CD4-positive, alpha-beta T cell (primary cell): ENCODE measurements at regions of chr16 and their contacts with region 1.

Region 1: DNA sequence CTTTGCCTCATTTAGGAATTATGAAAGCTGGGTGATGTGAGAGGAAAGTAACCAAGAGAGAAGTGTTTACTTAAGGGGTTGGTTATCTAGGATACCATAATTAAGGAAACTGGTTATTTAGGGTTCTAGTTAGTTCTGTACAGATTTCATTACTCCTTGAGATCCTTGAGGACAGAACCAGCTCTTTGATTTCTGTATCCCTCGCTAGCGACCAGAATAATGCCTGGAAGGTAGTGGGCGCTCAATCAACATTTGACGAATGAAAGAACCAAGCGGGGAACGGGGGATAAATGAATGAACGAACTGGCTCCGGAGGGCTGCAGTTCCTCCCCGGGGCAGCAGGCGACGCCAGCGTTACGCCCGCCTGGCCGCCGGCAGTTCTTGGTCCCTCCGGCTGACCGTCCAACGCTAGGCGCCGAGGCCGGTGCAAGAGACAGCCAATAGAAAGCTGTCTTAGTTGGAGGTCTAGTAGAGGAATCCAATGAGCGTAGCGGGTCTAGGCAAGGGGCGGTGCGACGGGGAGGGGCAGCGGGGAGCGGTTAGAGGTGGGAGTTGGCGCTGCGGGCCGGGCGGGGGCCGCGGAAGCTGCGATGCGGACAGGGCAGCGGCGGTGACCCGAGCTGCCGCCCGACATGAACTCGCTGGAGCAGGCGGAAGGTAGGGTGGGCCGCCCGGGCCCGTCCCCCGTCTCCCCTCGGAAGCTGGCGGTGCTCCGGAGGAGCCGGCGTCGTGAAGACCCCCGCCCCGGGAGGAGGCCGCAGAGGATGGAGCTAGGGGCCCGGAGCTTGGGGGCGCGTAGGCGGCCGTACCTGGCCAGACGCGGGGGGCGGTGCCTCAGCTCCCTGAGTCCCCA is at the start of gene CNEP1R1:
- DNase-seq: peak; percentile 83 to 97 (median 91)
- ATAC-seq: peak; percentile 90
- H3K4me3 ChIP-seq: peak within 1 kb of the TSS; percentile 90
- H3K4me3 Mint-ChIP-seq: peak within 1 kb of the TSS; percentile 94
- H3K27ac ChIP-seq: peak within 1 kb of the TSS; percentile 58
- H3K27ac Mint-ChIP-seq: peak within 1 kb of the TSS; percentile 90
- H3K4me1 ChIP-seq: peaks cover 25% of the 10 kb centered on the region
- H3K4me1 Mint-ChIP-seq: peaks cover 38% of the 10 kb centered on the region
- H3K27me3 ChIP-seq: no peaks in the 10 kb centered on the region
- H3K27me3 Mint-ChIP-seq: no peaks in the 10 kb centered on the region
- CTCF ChIP-seq: peak; percentile 99
- total RNA-seq, gene CNEP1R1: 36.6 to 46.3 TPM

Region 2: DNA sequence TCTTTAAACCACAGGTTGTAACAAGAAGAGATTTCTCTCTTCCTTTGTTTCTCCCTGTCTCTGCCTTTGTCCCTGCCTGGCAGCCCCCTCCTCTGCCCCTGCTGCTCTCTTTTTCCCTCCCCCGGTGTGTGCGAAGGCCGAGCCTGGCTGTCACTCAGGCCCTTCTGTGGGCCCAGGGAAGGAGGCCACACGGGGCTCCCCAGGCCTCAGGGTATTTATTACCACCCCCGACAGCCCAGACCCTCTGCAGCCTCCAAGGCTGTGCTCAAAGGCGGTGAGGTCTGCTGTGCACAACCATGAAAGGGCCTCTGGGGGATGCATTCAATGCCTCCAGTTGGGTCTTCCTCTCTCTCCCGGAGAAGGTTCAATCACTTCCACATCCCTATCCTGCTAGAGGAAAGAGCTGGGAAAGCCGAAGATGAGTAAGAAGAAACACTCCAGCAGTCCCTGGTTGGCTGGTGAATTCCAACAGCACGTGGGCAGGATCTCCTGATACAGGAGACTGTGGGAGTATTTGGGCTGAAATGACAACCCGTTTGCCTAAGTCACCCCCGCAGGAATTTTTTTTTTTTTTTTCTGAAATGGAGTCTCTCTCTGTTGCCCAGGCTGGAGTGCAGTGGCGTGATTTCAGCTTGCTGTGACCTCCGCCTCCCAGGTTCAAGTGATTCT is 203.2 kb before region 1 on chr16:
- CTCF ChIA-PET with region 1: no interaction called
- POLR2A ChIA-PET with region 1: no interaction called
- intact Hi-C with region 1: no loop called
- DNase-seq: no peak
- ATAC-seq: no peak
- H3K4me3 ChIP-seq: no peak overlapping the region
- H3K4me3 Mint-ChIP-seq: no peak overlapping the region
- H3K27ac ChIP-seq: no peak overlapping the region
- H3K27ac Mint-ChIP-seq: no peak overlapping the region
- H3K4me1 ChIP-seq: no peaks in the 10 kb centered on the region
- H3K4me1 Mint-ChIP-seq: no peaks in the 10 kb centered on the region
- H3K27me3 ChIP-seq: no peaks in the 10 kb centered on the region
- H3K27me3 Mint-ChIP-seq: peaks cover 5% of the 10 kb centered on the region
- CTCF ChIP-seq: no peak

Region 3: GRCh38 chr16:50037662-50038220 is 12.8 kb after region 1 on chr16:
- CTCF ChIA-PET with region 1: interaction called, 13 read pairs
- POLR2A ChIA-PET with region 1: interaction called, 4 read pairs
- intact Hi-C with region 1: no loop called
- DNase-seq: peak in 1 of 14 experiments; percentile 11
- ATAC-seq: no peak
- H3K4me3 ChIP-seq: no peak overlapping the region
- H3K4me3 Mint-ChIP-seq: no peak overlapping the region
- H3K27ac ChIP-seq: no peak overlapping the region
- H3K27ac Mint-ChIP-seq: no peak overlapping the region
- H3K4me1 ChIP-seq: no peaks in the 10 kb centered on the region
- H3K4me1 Mint-ChIP-seq: peaks cover 4% of the 10 kb centered on the region
- H3K27me3 ChIP-seq: no peaks in the 10 kb centered on the region
- H3K27me3 Mint-ChIP-seq: no peaks in the 10 kb centered on the region
- CTCF ChIP-seq: no peak

Region 4: GRCh38 chr16:50065624-50066481 is 40.9 kb after region 1 on chr16 and contains the start of gene HEATR3:
- CTCF ChIA-PET with region 1: interaction called, 48 read pairs
- POLR2A ChIA-PET with region 1: interaction called, 41 read pairs
- intact Hi-C with region 1: loop called (anchors 1 kb)
- DNase-seq: peak; percentile 89 to 98 (median 95)
- ATAC-seq: peak; percentile 83
- H3K4me3 ChIP-seq: peak within 1 kb of the TSS; percentile 69
- H3K4me3 Mint-ChIP-seq: peak within 1 kb of the TSS; percentile 99
- H3K27ac ChIP-seq: peak within 1 kb of the TSS; percentile 69 to 85
- H3K27ac Mint-ChIP-seq: peak within 1 kb of the TSS; percentile 83
- H3K4me1 ChIP-seq: peaks cover 25% of the 10 kb centered on the region
- H3K4me1 Mint-ChIP-seq: peaks cover 53% of the 10 kb centered on the region
- H3K27me3 ChIP-seq: no peaks in the 10 kb centered on the region
- H3K27me3 Mint-ChIP-seq: no peaks in the 10 kb centered on the region
- CTCF ChIP-seq: no peak
- total RNA-seq, gene HEATR3: 10.1 to 10.6 TPM

Region 5: GRCh38 chr16:50081428-50082018 is 56.6 kb after region 1 on chr16:
- CTCF ChIA-PET with region 1: no interaction called
- POLR2A ChIA-PET with region 1: no interaction called
- intact Hi-C with region 1: no loop called
- DNase-seq: no peak
- ATAC-seq: no peak
- H3K4me3 ChIP-seq: no peak overlapping the region
- H3K4me3 Mint-ChIP-seq: no peak overlapping the region
- H3K27ac ChIP-seq: no peak overlapping the region
- H3K27ac Mint-ChIP-seq: no peak overlapping the region
- H3K4me1 ChIP-seq: no peaks in the 10 kb centered on the region
- H3K4me1 Mint-ChIP-seq: peaks cover 17% of the 10 kb centered on the region
- H3K27me3 ChIP-seq: no peaks in the 10 kb centered on the region
- H3K27me3 Mint-ChIP-seq: no peaks in the 10 kb centered on the region
- CTCF ChIP-seq: no peak

Region 6: DNA sequence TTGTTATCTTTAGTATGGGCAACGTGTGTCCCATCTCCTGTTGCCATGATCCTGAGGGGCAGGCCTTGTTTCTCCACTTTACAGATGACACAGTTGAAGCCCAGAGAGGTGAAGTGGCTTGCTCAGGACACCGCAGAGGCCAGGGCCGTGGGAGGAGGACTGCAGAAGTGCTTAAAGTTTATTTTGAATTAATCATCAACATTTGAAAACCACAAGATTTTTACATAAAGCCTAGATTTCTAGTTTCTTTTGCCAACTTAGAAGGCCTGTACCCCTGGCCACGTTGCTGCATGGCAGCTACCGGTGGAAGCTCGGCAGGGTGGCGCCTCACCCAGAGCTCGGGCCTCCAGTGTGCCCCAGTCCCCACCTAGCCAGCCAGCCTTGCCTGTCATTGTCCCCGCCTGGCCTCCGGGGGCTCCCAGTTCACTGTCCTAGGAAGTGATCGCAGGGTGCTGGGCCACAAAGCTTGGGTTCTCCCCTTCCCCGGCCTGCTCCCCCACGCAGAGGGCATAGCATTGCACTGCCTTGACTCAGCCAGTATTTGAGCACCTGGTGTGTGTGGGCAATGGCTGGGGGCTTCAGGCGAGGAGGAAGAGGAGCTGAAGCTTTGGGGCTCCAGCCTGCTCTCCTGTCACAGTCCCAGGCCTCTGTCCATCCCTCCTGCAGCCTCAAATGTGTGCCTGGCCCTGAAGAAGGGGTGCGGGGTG is 226.6 kb after region 1 on chr16:
- CTCF ChIA-PET with region 1: no interaction called
- POLR2A ChIA-PET with region 1: no interaction called
- intact Hi-C with region 1: no loop called
- DNase-seq: no peak
- ATAC-seq: no peak
- H3K4me3 ChIP-seq: no peak overlapping the region
- H3K4me3 Mint-ChIP-seq: no peak overlapping the region
- H3K27ac ChIP-seq: no peak overlapping the region
- H3K27ac Mint-ChIP-seq: no peak overlapping the region
- H3K4me1 ChIP-seq: peaks cover 6% of the 10 kb centered on the region
- H3K4me1 Mint-ChIP-seq: no peaks in the 10 kb centered on the region
- H3K27me3 ChIP-seq: no peaks in the 10 kb centered on the region
- H3K27me3 Mint-ChIP-seq: no peaks in the 10 kb centered on the region
- CTCF ChIP-seq: no peak

Region 7: GRCh38 chr16:50354629-50355456 is 329.9 kb after region 1 on chr16:
- CTCF ChIA-PET with region 1: interaction called, 5 read pairs
- POLR2A ChIA-PET with region 1: interaction called, 3 read pairs
- intact Hi-C with region 1: loop called in 1 of 2 experiments (anchors 5 kb)
- DNase-seq: peak in 3 of 14 experiments; percentile 49 to 51 (median 50)
- ATAC-seq: peak; percentile 55
- H3K4me3 ChIP-seq: no peak overlapping the region
- H3K4me3 Mint-ChIP-seq: no peak overlapping the region
- H3K27ac ChIP-seq: no peak overlapping the region
- H3K27ac Mint-ChIP-seq: peak overlapping the region; percentile 80
- H3K4me1 ChIP-seq: peaks cover 3% of the 10 kb centered on the region
- H3K4me1 Mint-ChIP-seq: peaks cover 52% of the 10 kb centered on the region
- H3K27me3 ChIP-seq: no peaks in the 10 kb centered on the region
- H3K27me3 Mint-ChIP-seq: no peaks in the 10 kb centered on the region
- CTCF ChIP-seq: peak; percentile 95

Region 8: DNA sequence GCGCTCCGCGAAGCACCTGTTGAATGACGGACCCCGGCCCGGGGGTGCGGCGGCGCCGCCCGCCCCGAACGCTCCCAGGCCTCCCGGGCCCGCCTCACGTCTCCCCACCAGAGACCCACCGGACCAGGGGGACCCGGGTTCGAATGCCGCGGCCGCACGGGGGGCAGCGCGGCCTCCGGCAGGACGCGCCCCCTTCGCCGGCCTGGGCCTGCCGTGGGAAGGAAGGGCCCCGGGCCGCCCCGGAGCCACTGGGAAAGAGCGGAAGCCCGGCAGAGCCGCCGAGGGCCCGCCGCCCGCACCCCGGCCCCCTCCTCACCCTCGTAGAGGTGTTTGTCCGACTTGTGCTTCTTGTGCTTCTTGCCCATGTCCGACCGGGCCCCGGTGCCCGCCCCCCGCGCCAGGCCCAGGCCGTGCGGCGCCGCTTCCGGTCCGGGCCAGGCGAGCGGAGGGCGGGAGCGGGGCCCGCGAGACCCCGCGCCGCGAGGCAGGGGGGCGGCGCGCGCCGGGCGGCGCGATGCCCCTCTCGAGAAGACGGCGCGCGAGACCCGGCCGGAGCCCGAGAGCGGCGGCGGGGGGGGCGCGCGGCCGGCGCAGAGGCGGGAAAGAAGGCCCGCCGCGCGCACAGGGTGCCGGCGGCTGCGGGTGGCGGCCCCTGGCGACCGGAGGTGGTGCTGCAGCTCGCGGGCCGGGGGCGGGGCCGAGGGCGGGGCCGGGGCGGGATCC is 343.7 kb after region 1 on chr16 and contains the start of gene BRD7:
- CTCF ChIA-PET with region 1: interaction called, 3 read pairs
- POLR2A ChIA-PET with region 1: interaction called, 4 read pairs
- intact Hi-C with region 1: loop called in 1 of 2 experiments (anchors 2 kb)
- DNase-seq: peak; percentile 30 to 88 (median 70)
- ATAC-seq: peak; percentile 83
- H3K4me3 ChIP-seq: peak within 1 kb of the TSS; percentile 62
- H3K4me3 Mint-ChIP-seq: peak within 1 kb of the TSS; percentile 94
- H3K27ac ChIP-seq: peak within 1 kb of the TSS; percentile 15 to 52
- H3K27ac Mint-ChIP-seq: peak within 1 kb of the TSS; percentile 91
- H3K4me1 ChIP-seq: peaks cover 28% of the 10 kb centered on the region
- H3K4me1 Mint-ChIP-seq: peaks cover 58% of the 10 kb centered on the region
- H3K27me3 ChIP-seq: no peaks in the 10 kb centered on the region
- H3K27me3 Mint-ChIP-seq: no peaks in the 10 kb centered on the region
- CTCF ChIP-seq: no peak
- total RNA-seq, gene BRD7: 95.4 to 103 TPM